ENCODE measurements at regions of chr1 and their contacts with region 1.

Region 1: DNA sequence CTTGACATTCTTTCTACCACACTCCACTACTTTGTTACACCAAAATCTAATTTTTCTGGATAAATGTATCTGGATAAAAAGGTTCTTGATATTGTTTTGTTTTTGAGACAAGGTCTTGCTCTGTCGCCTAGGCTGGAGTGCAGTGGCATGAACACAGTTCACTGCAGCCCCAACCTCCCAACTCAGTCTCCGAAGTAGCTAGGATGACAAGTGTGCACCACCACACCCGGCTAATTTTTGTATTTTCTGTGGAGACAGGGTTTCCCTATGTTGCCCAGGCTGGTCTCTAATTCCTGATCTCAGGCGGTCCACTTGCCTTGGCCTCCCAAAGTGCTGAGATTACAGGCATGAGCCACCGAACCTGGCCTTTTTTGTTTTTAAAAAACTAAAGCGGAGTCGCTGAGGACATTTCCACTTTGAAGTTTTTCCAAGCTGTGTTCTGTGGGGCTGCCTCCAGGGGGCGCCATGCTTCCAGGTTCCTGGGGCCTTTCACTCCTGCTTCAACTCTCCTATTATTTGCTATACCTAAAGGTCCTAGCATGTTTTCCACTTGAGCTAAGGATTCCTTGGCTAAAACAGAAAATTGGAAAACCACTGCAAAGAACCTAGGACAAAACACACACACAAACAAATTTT is 14.1 kb upstream of the NCMAP start:
- DNase-seq: no peak
- ATAC-seq: no peak
- H3K4me3 ChIP-seq: no peak overlapping the region
- H3K27ac ChIP-seq: no peak overlapping the region
- H3K4me1 ChIP-seq: no peaks in the 10 kb centered on the region
- H3K27me3 ChIP-seq: no peaks in the 10 kb centered on the region
- CTCF ChIP-seq: peak in 4 of 5 experiments; percentile 39 to 59 (median 48)
- POLR2A ChIP-seq: no peak

Region 2: DNA sequence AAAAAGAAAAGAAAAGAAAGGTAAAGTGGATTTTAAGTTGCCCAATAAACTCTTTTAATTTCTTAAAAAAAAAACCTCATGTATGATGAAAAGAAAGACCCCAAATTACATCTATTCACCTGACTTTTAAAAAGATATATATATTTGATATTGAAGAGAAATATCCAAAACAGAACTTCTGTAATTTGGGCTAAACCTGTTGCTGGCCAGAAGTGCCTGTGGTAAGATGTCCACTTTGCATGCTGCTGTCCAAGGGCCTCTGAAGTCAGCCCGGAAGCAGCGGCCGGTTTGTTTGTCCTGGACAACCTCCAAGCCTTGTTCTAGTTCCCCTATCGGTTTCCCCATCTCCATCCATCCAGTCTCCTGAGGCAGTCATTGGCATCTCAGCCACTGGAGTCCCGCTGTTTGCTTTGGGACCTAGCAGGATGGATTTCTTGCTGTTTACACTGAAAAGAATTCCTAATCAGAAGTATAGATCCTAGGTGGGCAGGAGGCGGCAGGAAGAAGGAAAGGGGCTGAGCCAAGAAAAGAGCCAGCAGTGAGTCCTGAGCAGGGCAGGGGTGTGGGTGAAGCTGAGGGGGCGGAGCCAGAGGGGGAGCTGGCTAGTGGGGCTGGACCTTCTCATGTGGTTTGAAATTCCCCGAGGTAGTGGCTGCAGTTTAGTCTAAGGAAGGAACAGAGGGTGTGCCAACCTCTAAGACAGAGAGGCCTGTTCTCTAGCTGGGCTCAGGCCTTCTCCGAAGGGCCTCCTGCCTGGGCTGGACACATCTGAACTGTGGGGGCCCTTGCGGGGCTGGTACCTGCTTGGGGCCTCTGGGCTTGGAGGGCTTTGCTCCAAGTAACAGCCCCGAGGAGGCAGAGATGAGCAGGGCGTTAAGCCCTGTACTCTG is 17.3 kb after region 1 on chr1:
- in situ Hi-C with region 1: no loop called
- intact Hi-C with region 1: no loop called
- DNase-seq: peak; percentile 25 to 26
- ATAC-seq: peak; percentile 56 to 60
- H3K4me3 ChIP-seq: no peak overlapping the region
- H3K27ac ChIP-seq: peak overlapping the region in 3 of 4 donors; percentile 16 to 49 (median 40)
- H3K4me1 ChIP-seq: peaks cover 0 to 5% of the 10 kb centered on the region in 2 donors
- H3K27me3 ChIP-seq: peaks cover 23 to 27% (median 26%) of the 10 kb centered on the region in 3 donors
- CTCF ChIP-seq: no peak
- POLR2A ChIP-seq: no peak

Region 3: DNA sequence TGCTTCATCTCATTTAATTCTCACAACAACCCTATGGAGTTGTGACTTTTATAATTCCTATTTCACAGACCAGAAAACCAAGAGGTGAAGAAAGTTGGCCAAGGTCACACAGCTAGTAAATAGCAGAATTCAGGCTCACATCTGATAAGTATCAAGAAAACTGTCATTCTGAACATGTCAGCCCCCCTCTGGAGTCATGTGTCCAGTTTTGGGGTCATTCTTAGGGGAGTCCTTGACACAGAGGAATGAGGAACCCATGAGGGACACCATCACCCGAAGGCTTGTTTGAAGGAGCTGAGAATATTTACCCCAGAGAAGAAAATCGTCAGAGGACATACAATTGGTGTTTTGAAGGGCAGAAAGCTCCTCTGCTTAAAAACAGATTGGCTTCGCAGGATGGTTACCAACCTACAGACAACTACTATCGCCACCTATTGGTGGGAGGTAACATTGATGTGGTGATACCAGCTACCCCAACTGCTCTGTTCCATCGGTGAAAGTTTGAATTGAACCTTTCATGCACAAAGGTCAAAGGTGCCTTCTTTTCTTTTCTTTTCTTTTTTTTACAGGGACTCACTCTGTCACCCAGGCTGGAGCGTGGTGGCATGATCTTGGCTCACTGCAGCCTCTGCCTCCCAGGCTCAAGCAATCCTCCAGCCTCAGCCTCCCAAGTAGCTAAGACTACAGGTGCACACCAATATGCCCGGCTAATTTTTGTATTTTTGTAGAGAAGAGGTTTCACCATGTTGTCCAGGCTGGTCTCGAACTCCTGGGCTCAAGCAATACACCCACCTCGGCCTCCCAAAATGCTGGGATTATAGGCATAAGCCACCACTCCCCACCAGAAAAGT is 45.4 kb after region 1 on chr1:
- in situ Hi-C with region 1: no loop called
- intact Hi-C with region 1: no loop called
- DNase-seq: no peak
- ATAC-seq: peak in 1 of 2 donors; percentile 53
- H3K4me3 ChIP-seq: no peak overlapping the region
- H3K27ac ChIP-seq: no peak overlapping the region
- H3K4me1 ChIP-seq: peaks cover 0 to 5% of the 10 kb centered on the region in 2 donors
- H3K27me3 ChIP-seq: peaks cover 0 to 5% (median 0%) of the 10 kb centered on the region in 3 donors
- CTCF ChIP-seq: peak in 4 of 5 experiments; percentile 2 to 59 (median 48)
- POLR2A ChIP-seq: no peak

Region 4: GRCh38 chr1:24635195-24635843 is 93.5 kb after region 1 on chr1:
- in situ Hi-C with region 1: loop called in 1 of 4 experiments (anchors 10 kb)
- intact Hi-C with region 1: loop called (anchors 2 kb)
- DNase-seq: no peak
- ATAC-seq: no peak
- H3K4me3 ChIP-seq: no peak overlapping the region
- H3K27ac ChIP-seq: no peak overlapping the region
- H3K4me1 ChIP-seq: no peaks in the 10 kb centered on the region
- H3K27me3 ChIP-seq: peaks cover 0 to 12% (median 2%) of the 10 kb centered on the region in 3 donors
- CTCF ChIP-seq: peak in 3 of 5 experiments; percentile 37 to 47 (median 43)
- POLR2A ChIP-seq: no peak

Measured in gastrocnemius medialis (tissue), 4 donors.